ENCODE measurements at regions of chr4 and their contacts with region 1.

Region 1: DNA sequence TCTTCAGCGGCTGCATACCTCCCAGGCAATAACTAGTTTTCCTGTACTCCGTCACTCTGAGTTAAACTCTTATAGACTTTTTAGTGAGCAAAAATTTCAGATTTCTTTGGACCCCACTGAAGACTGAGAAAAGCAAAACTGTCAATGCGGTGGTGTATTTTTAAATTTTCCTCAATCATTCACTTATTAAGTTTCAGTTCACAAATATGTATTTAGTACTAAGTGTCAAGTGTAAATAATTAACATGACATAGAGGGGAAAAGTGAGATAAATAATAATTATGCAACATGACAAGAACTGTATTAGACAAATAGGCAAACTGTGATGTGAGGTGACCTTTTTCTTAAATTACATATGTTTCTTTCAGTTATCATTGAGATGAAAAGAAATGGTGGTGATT is 124.4 kb downstream of the NAF1 start:
- DNase-seq: no peak

Region 2: DNA sequence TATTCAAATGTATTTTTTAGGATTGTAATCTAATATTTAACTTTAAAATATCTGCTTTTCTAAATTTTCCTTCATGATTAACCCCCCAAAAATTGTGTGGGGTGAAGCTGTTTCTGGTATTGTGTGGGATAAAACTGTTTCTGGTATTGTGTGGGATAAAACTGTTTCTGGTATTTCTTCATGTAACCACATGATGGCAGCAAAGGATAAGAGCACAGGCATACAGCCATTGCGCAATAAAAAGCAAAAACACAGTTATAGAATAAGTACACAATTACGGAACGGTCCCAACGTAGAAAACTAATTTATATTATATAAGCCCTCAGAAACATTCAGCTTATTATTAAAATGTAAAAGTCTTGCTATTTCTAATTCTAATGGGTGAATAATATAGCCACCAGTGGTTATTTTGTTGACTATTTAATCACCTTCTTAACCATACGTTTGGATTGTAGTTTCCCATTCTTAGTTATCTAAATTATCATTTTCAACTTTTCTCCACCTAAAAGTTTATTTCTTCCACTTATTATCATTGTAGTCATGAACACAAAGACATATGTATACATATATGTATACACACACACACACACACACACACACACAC is 544.6 kb before region 1 on chr4:
- intact Hi-C with region 1: loop called in 1 of 2 experiments (anchors 5 kb)
- DNase-seq: no peak

Region 3: GRCh38 chr4:163085085-163085484 is 42.8 kb after region 1 on chr4:
- intact Hi-C with region 1: no loop called
- DNase-seq: no peak

Measured in posterior vena cava (tissue), 2 donors.